ENCODE measurements at regions of chr1 and their contacts with region 1.

Region 1: GRCh38 chr1:201895913-201896807 is 7.5 kb downstream of the SHISA4 start:
- DNase-seq: peak; percentile 73 to 90 (median 89)
- H3K4me3 ChIP-seq: peak overlapping the region in 40 of 59 donors; percentile 1 to 56 (median 34)
- H3K27ac ChIP-seq: peak overlapping the region in 53 of 59 donors; percentile 4 to 99 (median 70)
- H3K27me3 ChIP-seq: no peaks in the 10 kb centered on the region
- CTCF ChIP-seq: peak; percentile 75 to 98 (median 93)

Region 2: GRCh38 chr1:201774224-201774982 is 121.8 kb before region 1 on chr1:
- intact Hi-C with region 1: no loop called
- DNase-seq: no peak
- H3K4me3 ChIP-seq: no peak overlapping the region
- H3K27ac ChIP-seq: peak overlapping the region in 58 of 59 donors; percentile 11 to 100 (median 90)
- H3K27me3 ChIP-seq: no peaks in the 10 kb centered on the region
- CTCF ChIP-seq: no peak

Region 3: DNA sequence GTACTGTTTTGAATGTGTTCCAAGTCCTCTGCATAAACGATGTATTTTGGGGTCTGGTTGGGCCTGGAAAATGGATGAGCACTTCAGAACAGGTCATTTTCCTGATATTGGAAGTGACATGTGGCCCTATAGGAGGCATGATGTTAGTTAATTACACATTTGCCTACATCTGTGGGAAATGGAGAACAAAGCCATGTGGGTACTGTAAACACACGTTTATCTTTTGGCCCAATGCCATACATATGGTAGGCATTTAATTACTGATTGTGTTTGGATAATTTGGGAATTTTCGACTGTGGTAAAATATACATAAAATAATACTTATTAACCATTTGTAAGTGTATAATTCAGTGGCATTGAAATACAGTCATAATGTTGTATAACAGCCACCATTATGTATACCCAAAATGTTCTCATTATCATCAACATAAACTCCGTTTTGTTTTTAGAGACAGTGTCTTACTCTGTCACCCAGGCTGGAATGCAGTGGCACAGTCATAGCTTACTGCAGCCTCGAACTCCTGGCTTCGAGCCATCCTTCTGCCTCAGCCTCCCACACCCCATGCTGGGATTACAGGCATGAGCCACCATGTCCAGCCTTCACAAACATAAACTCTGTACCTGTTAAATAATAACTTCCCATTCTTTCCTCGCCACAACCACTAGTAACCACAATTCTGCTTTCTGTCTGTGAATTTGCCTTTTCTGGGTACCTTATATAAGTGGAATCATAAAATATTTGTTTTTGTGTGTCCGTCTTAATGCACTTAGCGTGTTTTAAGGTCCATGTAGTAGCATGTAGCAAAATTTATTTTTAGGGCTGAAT is 74.4 kb after region 1 on chr1:
- intact Hi-C with region 1: loop called (anchors 1 to 2 kb)
- DNase-seq: peak in 4 of 10 donors; percentile 25 to 69 (median 36)
- H3K4me3 ChIP-seq: no peak overlapping the region
- H3K27ac ChIP-seq: peak overlapping the region in 38 of 59 donors; percentile 1 to 71 (median 38)
- H3K27me3 ChIP-seq: no peaks in the 10 kb centered on the region
- CTCF ChIP-seq: no peak

Measured in dorsolateral prefrontal cortex (tissue), 120 donors.